ENCODE measurements at regions of chr1 and their contacts with region 1.

Region 1: DNA sequence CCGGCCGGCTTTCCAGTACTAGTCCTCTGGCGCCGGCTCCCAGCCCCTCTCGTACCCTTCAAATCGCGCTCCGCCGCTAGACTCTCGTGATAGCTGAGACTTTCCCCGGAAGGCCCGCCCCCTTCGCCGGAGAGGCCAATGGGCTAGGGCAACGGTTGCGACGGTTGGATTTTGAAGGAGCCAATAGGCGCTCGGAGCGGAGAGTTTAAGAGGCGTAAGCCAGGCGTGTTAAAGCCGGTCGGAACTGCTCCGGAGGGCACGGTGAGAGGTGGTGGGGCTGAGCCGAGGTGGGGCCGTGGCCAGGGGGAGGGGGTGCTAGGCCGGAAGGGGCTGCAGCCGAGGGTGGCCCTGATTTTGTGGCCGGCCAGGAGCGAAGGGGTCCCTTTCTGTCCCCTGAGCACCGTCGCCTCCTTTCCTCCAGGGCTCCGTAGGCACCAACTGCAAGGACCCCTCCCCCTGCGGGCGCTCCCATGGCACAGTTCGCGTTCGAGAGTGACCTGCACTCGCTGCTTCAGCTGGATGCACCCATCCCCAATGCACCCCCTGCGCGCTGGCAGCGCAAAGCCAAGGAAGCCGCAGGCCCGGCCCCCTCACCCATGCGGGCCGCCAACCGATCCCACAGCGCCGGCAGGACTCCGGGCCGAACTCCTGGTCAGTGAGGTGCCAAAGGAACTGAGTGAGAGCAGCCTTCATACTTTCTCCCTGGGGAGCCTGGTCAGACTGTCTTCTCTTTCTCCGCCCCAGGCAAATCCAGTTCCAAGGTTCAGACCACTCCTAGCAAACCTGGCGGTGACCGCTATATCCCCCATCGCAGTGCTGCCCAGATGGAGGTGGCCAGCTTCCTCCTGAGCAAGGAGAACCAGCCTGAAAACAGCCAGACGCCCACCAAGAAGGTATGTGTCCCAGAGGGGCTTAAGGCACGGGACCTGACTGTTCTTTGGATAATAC is at the start of gene CDC20:
- DNase-seq: peak; percentile 100
- ATAC-seq: peak; percentile 97
- H3K4me3 Mint-ChIP-seq: peak within 1 kb of the TSS; percentile 94
- H3K27ac Mint-ChIP-seq: peak within 1 kb of the TSS; percentile 89
- H3K4me1 Mint-ChIP-seq: peaks cover 51% of the 10 kb centered on the region
- H3K27me3 Mint-ChIP-seq: no peaks in the 10 kb centered on the region
- total RNA-seq, gene CDC20: 188 to 194 TPM

Region 2: GRCh38 chr1:43227143-43227764 is 131.8 kb before region 1 on chr1:
- CTCF ChIA-PET with region 1: interaction called, 12 read pairs
- DNase-seq: peak; percentile 87
- ATAC-seq: peak; percentile 91
- H3K4me3 Mint-ChIP-seq: no peak overlapping the region
- H3K27ac Mint-ChIP-seq: no peak overlapping the region
- H3K4me1 Mint-ChIP-seq: peaks cover 1% of the 10 kb centered on the region
- H3K27me3 Mint-ChIP-seq: no peaks in the 10 kb centered on the region

Region 3: DNA sequence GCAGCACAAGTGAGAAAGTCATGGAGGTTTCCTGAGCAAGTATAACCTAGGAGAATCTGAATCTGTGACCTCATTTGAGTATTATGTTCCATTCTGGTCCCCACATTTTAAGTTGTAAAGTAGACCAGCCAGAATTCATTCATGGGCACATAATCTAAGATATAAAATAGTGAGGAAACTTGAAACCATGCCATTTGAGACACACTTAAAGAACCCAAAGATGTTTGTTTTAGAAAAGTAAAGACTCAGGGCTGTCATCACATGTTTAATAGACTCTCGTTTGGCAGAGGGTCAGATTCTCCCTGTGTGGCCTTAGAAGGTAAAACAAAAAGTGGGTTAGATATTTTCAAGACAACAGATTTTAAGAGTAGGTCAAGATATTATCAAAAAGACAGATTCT is 37.0 kb after region 1 on chr1:
- CTCF ChIA-PET with region 1: no interaction called
- DNase-seq: no peak
- ATAC-seq: no peak
- H3K4me3 Mint-ChIP-seq: no peak overlapping the region
- H3K27ac Mint-ChIP-seq: no peak overlapping the region
- H3K4me1 Mint-ChIP-seq: peaks cover 4% of the 10 kb centered on the region
- H3K27me3 Mint-ChIP-seq: no peaks in the 10 kb centered on the region